WTC11 (cell line): ENCODE measurements at regions of chr1 and their contacts with region 1.

Region 1: GRCh38 chr1:230403442-230403841 is 22.7 kb downstream of the PGBD5 start:
- DNase-seq: peak; percentile 61
- ATAC-seq: peak; percentile 73
- H3K4me3 Mint-ChIP-seq: no peak overlapping the region
- H3K27ac Mint-ChIP-seq: no peak overlapping the region
- H3K4me1 Mint-ChIP-seq: peaks cover 36% of the 10 kb centered on the region
- H3K27me3 Mint-ChIP-seq: no peaks in the 10 kb centered on the region
- CTCF ChIP-seq: peak; percentile 24; the same call in 1 of the 2 replicates

Region 2: DNA sequence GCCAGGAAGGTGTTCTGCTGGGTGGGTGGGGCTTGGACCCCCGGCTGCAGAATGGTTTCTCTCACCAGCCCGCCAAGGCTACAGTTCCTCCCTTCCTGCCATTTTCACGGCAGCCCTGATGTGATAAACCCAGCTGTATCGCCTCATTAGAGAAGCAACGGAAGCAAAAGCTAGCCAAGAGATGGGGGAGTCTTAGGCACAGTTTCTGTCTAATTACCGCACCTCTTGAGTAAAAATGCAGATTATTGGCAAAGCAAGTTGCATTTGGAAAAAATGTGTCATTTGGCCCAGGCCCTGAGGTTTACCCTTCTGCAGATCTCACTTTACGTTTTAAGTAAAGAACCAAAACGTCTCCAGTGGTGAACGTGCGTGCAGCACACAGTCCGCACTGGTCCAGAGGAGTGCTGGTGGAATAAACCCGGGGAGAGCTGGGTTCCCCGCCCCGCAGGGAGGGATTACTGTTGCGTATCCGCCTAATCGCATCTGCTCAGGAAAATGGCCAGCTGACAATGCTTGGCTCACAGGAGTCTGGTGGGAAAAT is 226.5 kb before region 1 on chr1:
- CTCF ChIA-PET with region 1: no interaction called
- POLR2A ChIA-PET with region 1: no interaction called
- DNase-seq: no peak
- ATAC-seq: peak; percentile 55
- H3K4me3 Mint-ChIP-seq: no peak overlapping the region
- H3K27ac Mint-ChIP-seq: no peak overlapping the region; the same call in 1 of the 2 replicates
- H3K4me1 Mint-ChIP-seq: peaks cover 48% of the 10 kb centered on the region
- H3K27me3 Mint-ChIP-seq: no peaks in the 10 kb centered on the region
- CTCF ChIP-seq: no peak

Region 3: DNA sequence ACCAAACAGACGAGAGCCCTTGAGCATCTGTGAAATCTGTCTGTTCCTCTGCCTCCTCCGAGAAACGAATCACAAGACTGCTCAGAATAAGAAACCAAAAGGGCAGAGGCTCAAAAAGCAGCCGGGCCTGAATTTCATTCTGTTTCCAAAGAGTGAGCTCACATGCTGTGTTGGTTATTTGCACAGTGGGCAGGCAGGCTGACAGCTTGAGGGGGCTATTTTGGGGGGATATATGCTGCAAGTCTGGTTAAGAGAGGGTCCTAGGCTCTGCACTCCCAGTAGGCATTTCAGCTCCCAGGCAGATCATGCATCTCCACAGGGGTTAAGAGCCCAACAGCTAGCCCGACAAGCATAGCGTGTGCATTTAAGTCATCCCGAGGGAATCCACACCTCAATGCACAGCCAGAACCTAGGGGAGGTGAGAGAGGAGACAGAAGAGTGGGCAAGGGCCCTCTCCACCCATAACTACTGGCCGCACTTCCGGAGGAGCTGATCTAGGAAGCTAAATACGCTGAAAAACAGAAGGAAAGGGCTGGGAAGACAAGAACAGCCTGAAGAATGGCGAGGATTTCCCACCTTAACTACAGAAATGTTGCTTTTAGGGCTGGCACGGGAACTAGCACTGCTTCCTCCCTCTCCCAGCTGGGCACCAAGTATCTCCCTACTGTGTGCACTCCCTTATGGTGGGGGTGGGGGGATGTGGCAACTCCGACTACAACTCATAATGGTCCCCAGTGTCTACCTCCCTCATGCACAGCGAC is 19.0 kb after region 1 on chr1:
- CTCF ChIA-PET with region 1: interaction called, 10 read pairs
- POLR2A ChIA-PET with region 1: no interaction called
- DNase-seq: no peak
- ATAC-seq: peak; percentile 2; the same call in 1 of the 2 replicates
- H3K4me3 Mint-ChIP-seq: peak overlapping the region; percentile 83
- H3K27ac Mint-ChIP-seq: peak overlapping the region; percentile 27; the same call in 1 of the 2 replicates
- H3K4me1 Mint-ChIP-seq: peaks cover 58% of the 10 kb centered on the region
- H3K27me3 Mint-ChIP-seq: peaks cover 17% of the 10 kb centered on the region
- CTCF ChIP-seq: no peak

Region 4: DNA sequence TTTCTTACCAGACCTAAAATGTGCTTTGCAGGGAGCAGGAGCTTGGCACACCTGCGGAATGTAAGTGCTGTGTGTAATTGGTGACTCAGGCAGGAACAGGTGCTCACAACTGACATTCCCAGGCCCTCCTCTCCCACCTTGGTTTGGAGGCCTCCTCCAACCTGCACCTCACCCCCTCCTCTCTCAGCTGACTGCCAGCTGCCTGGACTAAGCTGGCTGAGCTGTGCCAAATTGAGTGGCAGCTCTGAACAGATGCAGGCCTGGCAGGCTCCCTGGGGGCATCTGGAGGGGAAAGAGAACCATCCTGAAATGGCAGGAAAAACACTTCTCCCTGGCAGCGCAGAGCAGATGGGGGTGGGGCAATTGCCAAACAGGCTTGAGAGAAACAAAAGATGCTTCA is 114.3 kb after region 1 on chr1:
- CTCF ChIA-PET with region 1: no interaction called
- POLR2A ChIA-PET with region 1: no interaction called
- DNase-seq: peak; percentile 17
- ATAC-seq: no peak; the same call in 1 of the 2 replicates
- H3K4me3 Mint-ChIP-seq: no peak overlapping the region
- H3K27ac Mint-ChIP-seq: no peak overlapping the region
- H3K4me1 Mint-ChIP-seq: peaks cover 54% of the 10 kb centered on the region
- H3K27me3 Mint-ChIP-seq: no peaks in the 10 kb centered on the region
- CTCF ChIP-seq: no peak